A673 (cell line): ENCODE measurements at regions of chr2 and their contacts with region 1.

Region 1: DNA sequence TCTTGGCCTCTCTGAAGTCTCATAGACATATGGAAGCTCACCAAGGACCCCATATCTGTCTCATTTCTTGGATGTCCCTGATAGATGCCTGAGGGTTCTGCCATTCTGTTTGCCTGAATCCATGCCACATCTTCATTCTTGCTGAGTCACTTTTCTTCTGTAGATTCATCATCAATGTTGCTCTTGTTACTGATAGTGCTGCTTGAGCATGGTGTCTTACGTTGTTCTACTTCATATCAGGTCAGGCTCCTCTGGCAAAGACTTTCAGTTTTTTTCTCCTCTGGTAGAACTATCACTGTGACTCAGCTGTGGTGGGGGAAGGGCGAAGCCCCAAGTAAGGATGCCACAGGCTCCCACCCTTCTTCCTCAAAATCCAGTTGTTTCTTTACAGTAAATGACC is 885.2 kb downstream of the DCDC2C start:
- DNase-seq: peak; percentile 65
- H3K4me3 ChIP-seq: peak overlapping the region; percentile 38
- H3K27ac ChIP-seq: peak overlapping the region; percentile 97
- H3K4me1 ChIP-seq: peaks cover 38% of the 10 kb centered on the region
- H3K27me3 ChIP-seq: no peaks in the 10 kb centered on the region
- CTCF ChIP-seq: no peak

Region 2: DNA sequence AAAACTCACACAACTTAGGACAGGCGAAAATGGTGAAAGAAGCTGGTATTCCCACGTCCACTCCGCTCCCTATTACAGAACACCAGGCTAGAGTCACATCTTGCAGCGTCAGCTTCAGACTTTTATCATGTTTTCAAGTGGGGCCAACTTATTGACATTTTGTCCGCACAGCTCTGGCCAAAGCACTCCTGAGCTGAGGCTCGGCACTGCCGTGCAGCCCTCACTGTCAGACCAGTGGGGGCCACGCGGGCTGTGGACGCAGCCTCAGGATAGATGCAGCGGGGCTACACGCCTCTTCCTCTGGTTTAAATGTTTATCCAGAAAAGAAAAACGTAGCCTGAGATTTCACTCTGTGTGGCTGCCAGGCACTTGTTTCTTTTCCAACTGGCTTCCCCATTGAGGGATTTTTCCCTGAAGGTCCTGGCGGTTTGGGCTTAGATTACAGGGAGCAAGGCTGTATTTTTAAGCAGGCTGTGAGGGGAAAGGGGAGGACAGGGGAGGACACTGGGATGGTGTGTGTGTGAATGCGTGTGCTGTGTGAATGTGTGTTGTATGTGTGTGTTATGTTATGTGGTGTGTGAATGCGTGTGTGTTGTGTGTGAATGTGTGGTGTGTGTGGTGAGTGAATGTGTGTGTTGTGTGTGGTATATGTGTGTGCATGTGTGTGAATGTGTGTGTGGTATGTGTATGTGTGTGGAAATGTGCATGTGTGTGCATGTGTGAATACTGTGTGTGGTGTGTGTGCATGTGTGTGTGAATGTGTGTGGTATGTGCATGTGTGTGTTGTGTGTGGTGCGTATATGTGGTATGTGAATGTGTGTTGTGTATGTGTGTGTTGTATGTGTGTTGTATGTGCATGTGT is 617.6 kb before region 1 on chr2:
- CTCF ChIA-PET with region 1: interaction called, 10 read pairs
- POLR2A ChIA-PET with region 1: no interaction called
- intact Hi-C with region 1: loop called (anchors 5 kb)
- DNase-seq: no peak
- H3K4me3 ChIP-seq: no peak overlapping the region
- H3K27ac ChIP-seq: no peak overlapping the region
- H3K4me1 ChIP-seq: peaks cover 4% of the 10 kb centered on the region
- H3K27me3 ChIP-seq: no peaks in the 10 kb centered on the region
- CTCF ChIP-seq: no peak

Region 3: DNA sequence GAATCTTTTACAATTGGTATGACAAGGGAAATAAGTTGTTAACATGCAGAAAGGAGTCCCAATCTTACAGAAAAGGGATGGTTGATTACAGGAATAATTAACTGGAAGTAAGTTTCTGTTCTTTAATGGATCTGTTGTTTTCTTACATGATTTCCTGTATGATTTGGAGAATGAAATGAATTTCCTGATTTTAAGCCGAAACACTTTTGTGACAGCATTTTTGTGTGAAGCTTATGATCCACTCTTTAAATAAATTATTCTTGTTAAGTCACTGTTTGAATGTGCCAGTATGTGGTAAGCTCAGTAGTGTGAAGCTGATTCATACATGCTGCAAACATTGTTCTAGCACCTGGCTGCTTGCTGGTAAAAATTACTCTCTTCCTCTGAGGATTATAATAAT is 369.0 kb before region 1 on chr2:
- CTCF ChIA-PET with region 1: no interaction called
- POLR2A ChIA-PET with region 1: no interaction called
- intact Hi-C with region 1: loop called (anchors 2 kb)
- DNase-seq: peak; percentile 93
- H3K4me3 ChIP-seq: no peak overlapping the region
- H3K27ac ChIP-seq: peak overlapping the region; percentile 74
- H3K4me1 ChIP-seq: peaks cover 39% of the 10 kb centered on the region
- H3K27me3 ChIP-seq: no peaks in the 10 kb centered on the region
- CTCF ChIP-seq: no peak

Region 4: DNA sequence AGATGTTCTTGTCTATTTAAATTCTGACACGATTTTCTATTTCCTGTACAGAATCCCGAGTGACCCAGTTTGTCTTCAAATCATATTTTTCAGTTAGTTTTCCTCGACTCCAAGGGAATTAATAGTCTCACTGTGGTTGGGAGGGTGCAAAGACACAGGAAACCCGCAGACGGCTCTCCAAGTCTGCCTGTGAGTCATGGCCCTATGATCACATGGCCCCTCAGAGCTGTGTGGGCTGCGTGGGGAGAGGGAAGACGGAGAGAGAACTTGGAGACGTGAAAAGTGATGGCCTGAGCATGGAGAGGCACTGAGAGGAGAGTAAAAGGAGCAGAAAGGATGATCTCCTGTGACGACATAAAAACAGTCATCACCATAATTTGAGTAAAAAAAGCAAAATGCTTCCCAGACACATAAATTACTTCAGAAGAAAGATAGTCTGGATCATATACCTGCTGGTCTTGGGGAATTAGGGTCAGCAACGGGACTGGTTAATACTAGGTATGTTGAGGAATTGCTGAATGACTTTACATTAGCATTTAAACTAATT is 104.7 kb after region 1 on chr2:
- CTCF ChIA-PET with region 1: no interaction called
- POLR2A ChIA-PET with region 1: no interaction called
- intact Hi-C with region 1: no loop called
- DNase-seq: peak; percentile 64
- H3K4me3 ChIP-seq: no peak overlapping the region
- H3K27ac ChIP-seq: no peak overlapping the region
- H3K4me1 ChIP-seq: peaks cover 21% of the 10 kb centered on the region
- H3K27me3 ChIP-seq: no peaks in the 10 kb centered on the region
- CTCF ChIP-seq: no peak

Region 5: DNA sequence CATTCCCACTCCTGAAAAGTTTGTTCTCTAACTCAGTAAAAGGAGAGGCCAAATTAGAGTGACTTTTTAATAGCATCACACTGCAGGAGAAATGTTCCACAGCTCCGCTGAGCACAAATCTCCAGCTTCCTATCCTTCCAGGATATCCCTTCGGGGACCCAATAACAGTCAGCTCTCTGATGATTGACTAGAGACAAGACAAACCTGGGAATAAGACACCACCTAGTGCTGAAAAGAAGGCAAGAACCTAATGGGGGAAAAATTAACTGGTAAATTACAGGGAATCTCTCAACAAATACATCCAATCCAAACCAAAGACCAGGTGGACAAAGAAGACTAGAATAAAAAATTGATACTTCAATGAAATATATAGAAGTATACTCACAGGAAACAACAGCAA is 126.5 kb after region 1 on chr2:
- CTCF ChIA-PET with region 1: interaction called, 15 read pairs
- POLR2A ChIA-PET with region 1: no interaction called
- intact Hi-C with region 1: loop called (anchors 2 kb)
- DNase-seq: peak; percentile 72
- H3K4me3 ChIP-seq: no peak overlapping the region
- H3K27ac ChIP-seq: peak overlapping the region; percentile 22
- H3K4me1 ChIP-seq: no peaks in the 10 kb centered on the region
- H3K27me3 ChIP-seq: no peaks in the 10 kb centered on the region
- CTCF ChIP-seq: peak; percentile 57

Region 6: GRCh38 chr2:4995466-4995865 is 406.9 kb after region 1 on chr2:
- CTCF ChIA-PET with region 1: no interaction called
- POLR2A ChIA-PET with region 1: no interaction called
- intact Hi-C with region 1: no loop called
- DNase-seq: peak; percentile 32
- H3K4me3 ChIP-seq: no peak overlapping the region
- H3K27ac ChIP-seq: no peak overlapping the region
- H3K4me1 ChIP-seq: no peaks in the 10 kb centered on the region
- H3K27me3 ChIP-seq: no peaks in the 10 kb centered on the region
- CTCF ChIP-seq: peak; percentile 43; the same call in 1 of the 2 replicates

Region 7: DNA sequence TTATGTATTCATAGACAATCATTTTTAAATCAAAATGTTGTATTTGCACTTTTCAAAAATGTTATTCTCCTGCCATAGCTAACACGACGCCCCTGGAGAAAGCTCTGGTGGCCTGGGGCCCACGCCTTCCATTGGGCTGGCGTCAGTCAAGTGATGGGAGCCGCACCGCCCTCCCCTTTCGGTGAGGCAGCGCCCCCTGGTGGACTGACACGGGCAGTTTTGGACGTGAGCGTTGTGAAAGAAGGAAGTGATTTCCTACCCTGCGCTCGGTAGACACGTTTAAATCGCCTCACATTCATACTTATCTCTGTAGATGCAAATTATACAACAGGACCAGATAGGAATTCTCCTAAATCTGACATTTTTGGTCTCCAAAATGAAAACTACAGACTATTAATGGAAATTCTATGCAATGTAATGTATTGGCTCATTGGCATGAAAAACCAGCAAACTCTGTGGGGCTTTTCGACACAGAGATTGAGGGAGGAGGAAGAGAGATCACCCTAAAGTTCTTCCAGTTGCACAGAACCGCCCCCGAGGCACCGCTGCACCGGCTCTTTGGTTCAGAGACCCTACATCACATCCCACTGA is 777.4 kb after region 1 on chr2:
- CTCF ChIA-PET with region 1: no interaction called
- POLR2A ChIA-PET with region 1: no interaction called
- intact Hi-C with region 1: loop called (anchors 5 kb)
- DNase-seq: peak; percentile 92
- H3K4me3 ChIP-seq: no peak overlapping the region
- H3K27ac ChIP-seq: no peak overlapping the region
- H3K4me1 ChIP-seq: peaks cover 4% of the 10 kb centered on the region
- H3K27me3 ChIP-seq: no peaks in the 10 kb centered on the region
- CTCF ChIP-seq: peak; percentile 96